ENCODE measurements at regions of chr16 and their contacts with region 1.

Region 1: GRCh38 chr16:17578921-17579874 is 108.4 kb upstream of the XYLT1 start:
- DNase-seq: peak; percentile 73
- H3K4me3 Mint-ChIP-seq: no peak overlapping the region
- H3K27ac Mint-ChIP-seq: no peak overlapping the region
- H3K4me1 Mint-ChIP-seq: no peaks in the 10 kb centered on the region
- H3K27me3 Mint-ChIP-seq: peaks cover 5% of the 10 kb centered on the region

Region 2: DNA sequence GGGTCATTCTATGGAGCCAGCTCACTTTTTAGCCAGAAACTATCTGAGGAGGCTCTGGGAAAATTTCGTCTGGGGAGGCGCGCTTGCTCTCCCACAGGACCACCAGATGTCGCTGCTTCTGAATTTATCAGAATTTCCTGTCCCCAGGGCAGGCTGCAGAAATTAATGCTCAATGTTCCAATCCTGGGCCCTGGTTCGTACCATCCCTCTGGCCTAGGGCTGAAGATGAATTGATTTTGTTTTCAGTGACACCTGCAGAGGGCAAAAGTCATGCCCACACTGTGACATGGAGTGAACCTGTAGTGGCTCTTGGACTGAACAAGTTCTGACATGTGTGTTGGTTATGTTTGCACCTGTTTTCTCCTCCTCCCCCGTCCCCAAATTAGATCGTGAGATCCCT is 717.7 kb before region 1 on chr16:
- CTCF ChIA-PET with region 1: interaction called, 18 read pairs
- DNase-seq: peak; percentile 68
- H3K4me3 Mint-ChIP-seq: no peak overlapping the region
- H3K27ac Mint-ChIP-seq: no peak overlapping the region
- H3K4me1 Mint-ChIP-seq: no peaks in the 10 kb centered on the region
- H3K27me3 Mint-ChIP-seq: peaks cover 11% of the 10 kb centered on the region

Region 3: GRCh38 chr16:17556276-17557052 is 22.7 kb before region 1 on chr16:
- CTCF ChIA-PET with region 1: interaction called, 16 read pairs
- DNase-seq: no peak
- H3K4me3 Mint-ChIP-seq: no peak overlapping the region
- H3K27ac Mint-ChIP-seq: no peak overlapping the region
- H3K4me1 Mint-ChIP-seq: no peaks in the 10 kb centered on the region
- H3K27me3 Mint-ChIP-seq: peaks cover 18% of the 10 kb centered on the region

Region 4: DNA sequence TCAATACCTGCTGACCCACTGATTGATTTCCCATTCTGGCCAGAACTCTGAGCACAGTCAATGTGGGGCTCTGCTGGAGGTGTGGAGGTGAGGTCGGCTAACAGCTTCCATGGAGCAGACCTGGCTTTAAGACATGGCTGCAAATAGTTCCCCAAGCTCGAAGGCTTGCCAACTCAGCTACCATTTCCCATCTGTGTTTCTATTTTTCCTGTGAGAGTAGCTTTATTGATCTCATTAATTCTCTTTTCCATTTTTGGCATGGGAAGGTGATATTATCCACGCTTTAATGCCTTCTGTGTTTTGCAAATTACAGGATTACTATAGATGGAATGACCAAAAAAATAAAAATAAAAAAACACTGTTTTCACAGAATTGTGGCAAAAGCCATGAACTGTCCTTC is 43.2 kb after region 1 on chr16:
- CTCF ChIA-PET with region 1: no interaction called
- DNase-seq: no peak
- H3K4me3 Mint-ChIP-seq: no peak overlapping the region
- H3K27ac Mint-ChIP-seq: no peak overlapping the region
- H3K4me1 Mint-ChIP-seq: no peaks in the 10 kb centered on the region
- H3K27me3 Mint-ChIP-seq: peaks cover 4% of the 10 kb centered on the region